ENCODE measurements at regions of chr12 and their contacts with region 1.

Region 1: GRCh38 chr12:111396726-111397445 is 8.8 kb upstream of the SH2B3 start:
- DNase-seq: peak; percentile 77
- H3K4me3 Mint-ChIP-seq: peak overlapping the region; percentile 64
- H3K27ac Mint-ChIP-seq: peak overlapping the region; percentile 70
- H3K4me1 Mint-ChIP-seq: peaks cover 30% of the 10 kb centered on the region
- H3K27me3 Mint-ChIP-seq: peaks cover 13% of the 10 kb centered on the region

Region 2: DNA sequence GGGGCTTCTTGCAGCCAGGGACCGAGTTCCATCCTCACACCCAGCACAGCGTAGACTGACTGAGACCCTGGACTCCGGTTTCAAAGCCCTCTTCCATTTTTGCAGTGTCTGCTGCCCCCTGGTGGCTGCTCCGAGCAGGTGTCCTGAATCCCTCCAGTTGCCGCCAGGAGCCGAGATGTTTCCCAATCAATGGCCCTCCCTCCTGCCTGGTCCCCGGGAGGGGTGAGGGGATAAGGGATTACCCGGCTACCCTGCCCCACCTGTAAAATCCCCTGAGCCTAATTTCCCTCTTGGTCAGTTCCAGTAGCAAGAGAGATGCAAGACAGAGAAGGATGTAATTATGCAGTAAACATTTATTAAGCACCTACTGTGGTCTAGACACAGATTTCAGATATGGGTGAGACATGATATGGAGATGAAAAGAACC is 83.0 kb before region 1 on chr12:
- intact Hi-C with region 1: no loop called
- DNase-seq: peak; percentile 37
- H3K4me3 Mint-ChIP-seq: no peak overlapping the region
- H3K27ac Mint-ChIP-seq: peak overlapping the region; percentile 58
- H3K4me1 Mint-ChIP-seq: peaks cover 7% of the 10 kb centered on the region
- H3K27me3 Mint-ChIP-seq: peaks cover 6% of the 10 kb centered on the region

Region 3: GRCh38 chr12:111330800-111331752 is 65.8 kb before region 1 on chr12:
- intact Hi-C with region 1: loop called (anchors 2 kb)
- DNase-seq: no peak
- H3K4me3 Mint-ChIP-seq: no peak overlapping the region
- H3K27ac Mint-ChIP-seq: no peak overlapping the region
- H3K4me1 Mint-ChIP-seq: peaks cover 5% of the 10 kb centered on the region
- H3K27me3 Mint-ChIP-seq: no peaks in the 10 kb centered on the region

Region 4: DNA sequence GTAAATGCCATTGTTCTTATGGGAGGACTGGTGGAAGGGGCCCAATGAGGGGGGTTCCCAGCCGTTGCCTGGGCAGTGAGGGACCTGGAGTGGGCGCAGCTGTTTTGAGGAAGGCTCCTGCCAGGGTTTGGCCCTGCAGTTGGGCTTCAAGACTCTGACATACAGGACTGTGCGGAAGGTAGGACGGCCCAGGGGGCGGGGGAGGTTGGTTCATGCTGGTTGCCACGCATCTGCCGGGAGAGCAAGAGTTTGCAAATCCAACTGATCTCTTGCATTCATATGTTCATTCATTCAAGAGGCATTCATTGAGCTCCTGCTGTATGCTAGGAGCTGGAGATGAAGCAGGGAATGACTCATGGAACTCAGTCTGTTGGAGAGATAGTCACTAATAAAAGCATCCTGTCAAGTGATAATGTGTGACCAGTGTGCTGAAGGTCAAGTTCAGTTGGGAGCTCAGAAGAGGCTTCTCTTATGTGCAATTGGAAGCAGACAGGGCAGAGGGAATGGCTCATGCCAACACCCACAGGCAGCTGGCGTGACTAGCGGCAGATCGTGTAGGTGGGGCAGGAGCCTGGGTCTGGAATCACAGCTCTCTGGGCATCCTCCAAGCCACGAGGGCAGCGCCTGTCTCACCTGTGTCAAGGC is 16.7 kb after region 1 on chr12:
- intact Hi-C with region 1: no loop called
- DNase-seq: no peak
- H3K4me3 Mint-ChIP-seq: no peak overlapping the region
- H3K27ac Mint-ChIP-seq: peak overlapping the region; percentile 42
- H3K4me1 Mint-ChIP-seq: peaks cover 53% of the 10 kb centered on the region
- H3K27me3 Mint-ChIP-seq: no peaks in the 10 kb centered on the region

Region 5: GRCh38 chr12:111444925-111445725 is 48.2 kb after region 1 on chr12:
- intact Hi-C with region 1: loop called (anchors 1 kb)
- DNase-seq: peak; percentile 87
- H3K4me3 Mint-ChIP-seq: peak overlapping the region; percentile 71
- H3K27ac Mint-ChIP-seq: peak overlapping the region; percentile 82
- H3K4me1 Mint-ChIP-seq: peaks cover 88% of the 10 kb centered on the region
- H3K27me3 Mint-ChIP-seq: no peaks in the 10 kb centered on the region

Region 6: DNA sequence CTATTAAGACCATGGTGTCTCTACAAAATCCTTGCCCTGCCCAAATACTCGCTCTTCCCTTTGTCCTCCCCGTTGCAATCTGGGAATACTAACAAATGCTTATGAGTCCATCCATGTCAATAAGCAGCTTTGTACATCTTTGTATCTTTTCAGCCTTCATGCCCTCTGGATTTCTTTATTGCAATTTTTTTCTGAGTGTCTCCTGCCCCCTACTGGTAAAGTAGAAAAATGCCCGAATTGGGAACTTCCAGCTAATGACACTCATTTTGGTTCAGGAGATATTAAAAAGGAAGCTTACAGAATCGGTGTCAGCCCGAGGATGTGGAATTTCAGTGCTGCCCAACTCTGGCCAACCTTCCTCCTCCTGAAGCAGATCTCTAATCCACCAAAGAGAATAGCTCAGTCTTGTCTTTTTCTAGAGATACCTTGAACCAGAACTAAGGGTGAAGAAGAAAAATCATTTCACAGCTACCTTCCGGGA is 54.8 kb after region 1 on chr12:
- intact Hi-C with region 1: loop called (anchors 1 kb)
- DNase-seq: peak; percentile 21
- H3K4me3 Mint-ChIP-seq: peak overlapping the region; percentile 15
- H3K27ac Mint-ChIP-seq: no peak overlapping the region
- H3K4me1 Mint-ChIP-seq: peaks cover 50% of the 10 kb centered on the region
- H3K27me3 Mint-ChIP-seq: no peaks in the 10 kb centered on the region

Region 7: GRCh38 chr12:111482462-111482861 is 85.6 kb after region 1 on chr12:
- intact Hi-C with region 1: loop called (anchors 1 kb)
- DNase-seq: no peak
- H3K4me3 Mint-ChIP-seq: no peak overlapping the region
- H3K27ac Mint-ChIP-seq: no peak overlapping the region
- H3K4me1 Mint-ChIP-seq: no peaks in the 10 kb centered on the region
- H3K27me3 Mint-ChIP-seq: no peaks in the 10 kb centered on the region

Region 8: DNA sequence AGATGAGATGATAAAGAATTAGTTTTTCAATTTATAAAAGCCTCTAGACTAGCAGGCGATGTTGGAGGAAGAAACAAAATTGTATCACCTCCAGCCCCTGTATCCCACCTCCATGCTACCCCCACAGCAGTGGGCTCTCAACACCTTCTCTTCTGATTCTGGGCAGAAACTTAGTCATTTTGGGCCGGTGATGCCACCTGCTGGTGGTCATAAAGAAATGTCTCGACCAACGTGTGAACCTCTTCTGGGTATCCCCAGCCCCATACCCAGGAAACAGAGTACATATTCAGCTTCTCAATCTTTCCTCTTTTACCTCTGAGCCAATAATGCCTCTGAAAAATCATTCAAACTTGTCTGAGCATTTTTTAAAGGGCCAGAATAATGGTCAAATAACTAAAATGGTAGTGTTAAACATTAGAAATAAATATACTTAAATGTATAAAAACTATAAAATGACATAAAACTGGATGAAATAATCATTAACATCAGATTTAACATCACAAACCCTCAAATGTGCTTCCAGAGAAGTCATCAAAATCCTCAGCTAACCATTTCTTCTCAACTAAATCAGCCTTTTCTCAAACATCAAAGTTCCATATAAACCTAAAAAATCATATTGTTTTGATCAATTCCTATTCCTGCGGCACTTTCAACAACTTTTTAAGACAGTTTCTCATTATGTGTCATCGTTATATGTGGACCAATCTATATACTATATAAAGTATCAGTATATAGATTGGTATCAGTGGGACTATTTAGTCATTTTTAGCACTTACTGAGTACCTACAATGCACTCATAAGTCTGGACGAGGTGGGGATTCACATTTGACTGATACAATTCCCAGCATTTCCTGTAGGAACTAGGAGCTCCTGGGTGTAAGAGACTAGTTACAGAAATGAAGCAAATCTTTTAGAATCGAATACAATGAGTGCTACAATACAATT is 132.8 kb after region 1 on chr12:
- intact Hi-C with region 1: loop called (anchors 1 kb)
- DNase-seq: peak; percentile 47
- H3K4me3 Mint-ChIP-seq: no peak overlapping the region
- H3K27ac Mint-ChIP-seq: peak overlapping the region; percentile 44
- H3K4me1 Mint-ChIP-seq: peaks cover 14% of the 10 kb centered on the region
- H3K27me3 Mint-ChIP-seq: no peaks in the 10 kb centered on the region

Region 9: DNA sequence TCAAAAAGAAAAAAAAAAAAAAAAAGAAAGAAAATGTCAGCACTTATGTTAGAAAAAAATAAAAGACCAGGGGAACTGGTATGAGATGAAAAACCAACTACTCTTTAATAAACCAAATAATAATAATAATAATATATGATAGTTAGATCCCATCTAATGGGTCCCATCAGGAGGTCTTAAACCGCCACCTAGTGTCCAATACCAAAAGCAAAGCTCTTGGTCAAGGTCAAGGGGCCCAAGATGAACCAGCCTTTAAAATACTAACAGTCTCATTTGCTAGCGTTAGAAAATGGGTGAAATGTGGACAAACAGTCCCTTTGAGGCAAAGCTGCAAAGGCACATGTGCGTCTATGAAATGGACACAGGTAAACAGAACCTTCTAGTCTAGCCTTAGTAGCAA is 276.6 kb after region 1 on chr12:
- intact Hi-C with region 1: loop called (anchors 5 kb)
- DNase-seq: no peak
- H3K4me3 Mint-ChIP-seq: no peak overlapping the region
- H3K27ac Mint-ChIP-seq: no peak overlapping the region
- H3K4me1 Mint-ChIP-seq: no peaks in the 10 kb centered on the region
- H3K27me3 Mint-ChIP-seq: no peaks in the 10 kb centered on the region

Measured in activated T-helper 1 cell treated with anti-CD3 and anti-CD28 coated beads, Interleukin-12 subunit alpha, Interleukin-12 subunit beta, Interleukin-2, Interleukin-4 antibody, amounts not matched to agents 30 ng/mL and 10 ng/mL and 1 ng/mL, durations not matched to agents 14 hours and 24 hours and 36 hours (primary cell).